ENCODE measurements at regions of chr7 and their contacts with region 1.

Region 1: GRCh38 chr7:38215735-38216670 is 38.0 kb downstream of the STARD3NL start:
- DNase-seq: peak; percentile 72 to 76 (median 75)
- H3K4me3 ChIP-seq: no peak overlapping the region
- H3K4me3 Mint-ChIP-seq: peak overlapping the region in 7 of 8 donors; percentile 4 to 87 (median 56)
- H3K27ac ChIP-seq: peak overlapping the region; percentile 1
- H3K27ac Mint-ChIP-seq: peak overlapping the region; percentile 43 to 90 (median 83)
- H3K4me1 ChIP-seq: peaks cover 41% of the 10 kb centered on the region
- H3K4me1 Mint-ChIP-seq: peaks cover 24 to 47% (median 36%) of the 10 kb centered on the region in 4 donors
- H3K27me3 ChIP-seq: no peaks in the 10 kb centered on the region
- H3K27me3 Mint-ChIP-seq: no peaks in the 10 kb centered on the region

Region 2: GRCh38 chr7:37284805-37285231 is 931.2 kb before region 1 on chr7:
- CTCF ChIA-PET with region 1: no interaction called
- POLR2A ChIA-PET with region 1: no interaction called
- intact Hi-C with region 1: no loop called
- DNase-seq: peak in 4 of 5 donors; percentile 17 to 43 (median 28)
- H3K4me3 ChIP-seq: no peak overlapping the region
- H3K4me3 Mint-ChIP-seq: no peak overlapping the region
- H3K27ac ChIP-seq: no peak overlapping the region
- H3K27ac Mint-ChIP-seq: peak overlapping the region in 5 of 7 donors; percentile 47 to 81 (median 71)
- H3K4me1 ChIP-seq: peaks cover 28% of the 10 kb centered on the region
- H3K4me1 Mint-ChIP-seq: peaks cover 38 to 57% (median 51%) of the 10 kb centered on the region in 4 donors
- H3K27me3 ChIP-seq: no peaks in the 10 kb centered on the region
- H3K27me3 Mint-ChIP-seq: no peaks in the 10 kb centered on the region

Region 3: GRCh38 chr7:38178004-38178694 is 37.9 kb before region 1 on chr7 and contains the start of gene STARD3NL:
- CTCF ChIA-PET with region 1: interaction called, 40 read pairs
- POLR2A ChIA-PET with region 1: interaction called, 7 read pairs
- intact Hi-C with region 1: loop called (anchors 2 kb)
- DNase-seq: peak; percentile 90 to 97 (median 91)
- H3K4me3 ChIP-seq: peak within 1 kb of the TSS; percentile 97 to 98
- H3K4me3 Mint-ChIP-seq: peak within 1 kb of the TSS; percentile 92 to 100 (median 98)
- H3K27ac ChIP-seq: peak within 1 kb of the TSS; percentile 85
- H3K27ac Mint-ChIP-seq: peak within 1 kb of the TSS; percentile 92 to 98 (median 97)
- H3K4me1 ChIP-seq: peaks cover 27% of the 10 kb centered on the region
- H3K4me1 Mint-ChIP-seq: peaks cover 20 to 34% (median 27%) of the 10 kb centered on the region in 4 donors
- H3K27me3 ChIP-seq: no peaks in the 10 kb centered on the region
- H3K27me3 Mint-ChIP-seq: peaks cover 8 to 11% of the 10 kb centered on the region in 2 donors
- total RNA-seq, gene STARD3NL: 11.4 to 12.6 TPM

Region 4: GRCh38 chr7:38195804-38196595 is 20.0 kb before region 1 on chr7:
- CTCF ChIA-PET with region 1: interaction called, 40 read pairs
- POLR2A ChIA-PET with region 1: interaction called, 4 read pairs
- intact Hi-C with region 1: loop called (anchors 2 kb)
- DNase-seq: no peak
- H3K4me3 ChIP-seq: no peak overlapping the region
- H3K4me3 Mint-ChIP-seq: no peak overlapping the region
- H3K27ac ChIP-seq: no peak overlapping the region
- H3K27ac Mint-ChIP-seq: no peak overlapping the region
- H3K4me1 ChIP-seq: peaks cover 4% of the 10 kb centered on the region
- H3K4me1 Mint-ChIP-seq: peaks cover 17 to 35% (median 25%) of the 10 kb centered on the region in 4 donors
- H3K27me3 ChIP-seq: no peaks in the 10 kb centered on the region
- H3K27me3 Mint-ChIP-seq: no peaks in the 10 kb centered on the region

Region 5: GRCh38 chr7:38318803-38319416 is 102.9 kb after region 1 on chr7:
- CTCF ChIA-PET with region 1: interaction called, 135 read pairs
- POLR2A ChIA-PET with region 1: interaction called, 21 read pairs
- intact Hi-C with region 1: loop called (anchors 1 kb)
- DNase-seq: no peak
- H3K4me3 ChIP-seq: no peak overlapping the region
- H3K4me3 Mint-ChIP-seq: peak overlapping the region; percentile 70 to 87 (median 72)
- H3K27ac ChIP-seq: peak overlapping the region; percentile 31
- H3K27ac Mint-ChIP-seq: peak overlapping the region; percentile 72 to 90 (median 87)
- H3K4me1 ChIP-seq: peaks cover 36% of the 10 kb centered on the region
- H3K4me1 Mint-ChIP-seq: peaks cover 15 to 43% (median 22%) of the 10 kb centered on the region in 4 donors
- H3K27me3 ChIP-seq: no peaks in the 10 kb centered on the region
- H3K27me3 Mint-ChIP-seq: no peaks in the 10 kb centered on the region

Region 6: GRCh38 chr7:38335492-38336147 is 119.6 kb after region 1 on chr7:
- CTCF ChIA-PET with region 1: interaction called, 202 read pairs
- POLR2A ChIA-PET with region 1: interaction called, 13 read pairs
- intact Hi-C with region 1: loop called (anchors 1 kb)
- DNase-seq: peak; percentile 68 to 84 (median 74)
- H3K4me3 ChIP-seq: peak overlapping the region in 1 of 2 donors; percentile 18
- H3K4me3 Mint-ChIP-seq: peak overlapping the region; percentile 73 to 84 (median 79)
- H3K27ac ChIP-seq: peak overlapping the region; percentile 47
- H3K27ac Mint-ChIP-seq: peak overlapping the region; percentile 61 to 91 (median 87)
- H3K4me1 ChIP-seq: peaks cover 17% of the 10 kb centered on the region
- H3K4me1 Mint-ChIP-seq: peaks cover 16 to 53% (median 19%) of the 10 kb centered on the region in 4 donors
- H3K27me3 ChIP-seq: no peaks in the 10 kb centered on the region
- H3K27me3 Mint-ChIP-seq: no peaks in the 10 kb centered on the region

Region 7: GRCh38 chr7:38360776-38361175 is 144.8 kb after region 1 on chr7:
- CTCF ChIA-PET with region 1: interaction called, 758 read pairs
- POLR2A ChIA-PET with region 1: interaction called, 7 read pairs
- intact Hi-C with region 1: loop called (anchors 1 kb)
- DNase-seq: no peak
- H3K4me3 ChIP-seq: peak overlapping the region in 1 of 2 donors; percentile 48
- H3K4me3 Mint-ChIP-seq: peak overlapping the region; percentile 93 to 96 (median 96)
- H3K27ac ChIP-seq: peak overlapping the region; percentile 91
- H3K27ac Mint-ChIP-seq: peak overlapping the region; percentile 26 to 98 (median 57)
- H3K4me1 ChIP-seq: peaks cover 49% of the 10 kb centered on the region
- H3K4me1 Mint-ChIP-seq: peaks cover 31 to 70% (median 39%) of the 10 kb centered on the region in 4 donors
- H3K27me3 ChIP-seq: no peaks in the 10 kb centered on the region
- H3K27me3 Mint-ChIP-seq: no peaks in the 10 kb centered on the region

Region 8: DNA sequence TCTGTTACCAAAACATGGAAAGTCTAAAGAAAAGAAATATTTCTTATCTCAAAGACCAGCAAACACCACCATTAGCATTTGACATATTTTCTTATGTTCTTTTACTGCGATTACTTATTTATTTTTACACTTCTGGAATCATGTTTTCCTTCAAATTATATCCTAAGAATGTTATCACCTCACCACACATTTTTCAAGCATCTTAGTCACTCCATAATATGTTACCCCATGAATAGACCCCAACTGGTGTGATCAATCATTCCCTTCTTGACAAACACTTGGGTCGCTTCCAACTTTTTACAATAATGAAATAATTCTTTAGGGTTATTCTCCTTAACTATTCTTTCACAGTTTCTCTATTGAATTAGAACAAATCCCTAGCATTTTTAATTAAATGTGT is 347.7 kb after region 1 on chr7:
- CTCF ChIA-PET with region 1: no interaction called
- POLR2A ChIA-PET with region 1: no interaction called
- intact Hi-C with region 1: no loop called
- DNase-seq: no peak
- H3K4me3 ChIP-seq: no peak overlapping the region
- H3K4me3 Mint-ChIP-seq: no peak overlapping the region
- H3K27ac ChIP-seq: no peak overlapping the region
- H3K27ac Mint-ChIP-seq: no peak overlapping the region
- H3K4me1 ChIP-seq: no peaks in the 10 kb centered on the region
- H3K4me1 Mint-ChIP-seq: no peaks in the 10 kb centered on the region
- H3K27me3 ChIP-seq: no peaks in the 10 kb centered on the region
- H3K27me3 Mint-ChIP-seq: peaks cover 0 to 7% of the 10 kb centered on the region in 2 donors